ENCODE measurements at regions of chr4 and their contacts with region 1.

Region 1: GRCh38 chr4:7462509-7462971 is 27.8 kb upstream of the PSAPL1 start:
- DNase-seq: peak; percentile 63 to 78 (median 68)
- H3K4me3 ChIP-seq: no peak overlapping the region
- H3K27ac ChIP-seq: peak overlapping the region in 1 of 2 donors; percentile 55
- H3K4me1 ChIP-seq: peaks cover 29% of the 10 kb centered on the region
- H3K27me3 ChIP-seq: no peaks in the 10 kb centered on the region
- CTCF ChIP-seq: peak; percentile 18 to 40 (median 23)
- EP300 ChIP-seq: no peak
- POLR2A ChIP-seq: no peak

Region 2: GRCh38 chr4:7156761-7157488 is 305.6 kb before region 1 on chr4:
- intact Hi-C with region 1: no loop called
- DNase-seq: peak; percentile 68 to 80 (median 73)
- H3K4me3 ChIP-seq: no peak overlapping the region
- H3K27ac ChIP-seq: peak overlapping the region in 1 of 2 donors; percentile 36
- H3K4me1 ChIP-seq: peaks cover 23% of the 10 kb centered on the region
- H3K27me3 ChIP-seq: no peaks in the 10 kb centered on the region
- CTCF ChIP-seq: peak; percentile 53 to 79 (median 68)
- EP300 ChIP-seq: no peak
- POLR2A ChIP-seq: no peak

Region 3: DNA sequence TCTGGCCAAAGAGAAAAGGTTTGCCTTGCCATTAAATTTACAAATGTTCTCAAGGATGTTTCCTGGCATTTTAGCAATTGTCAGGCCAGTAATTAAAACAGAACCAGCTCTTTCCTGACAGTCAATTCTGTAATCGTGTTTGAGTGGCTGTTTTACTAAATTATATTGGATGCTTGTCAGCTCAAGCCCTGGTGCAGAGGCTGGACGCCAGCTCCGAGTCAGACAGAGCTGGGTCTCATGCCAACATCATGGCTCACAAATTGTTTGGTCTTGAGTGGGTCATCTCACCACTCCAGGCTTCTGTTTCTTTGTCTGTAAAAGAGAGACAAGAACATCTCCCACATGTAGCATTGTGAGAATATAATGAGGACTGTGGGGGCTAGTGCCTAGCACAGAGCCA is 162.5 kb after region 1 on chr4:
- intact Hi-C with region 1: no loop called
- DNase-seq: no peak
- H3K4me3 ChIP-seq: no peak overlapping the region
- H3K27ac ChIP-seq: no peak overlapping the region
- H3K4me1 ChIP-seq: peaks cover 2% of the 10 kb centered on the region
- H3K27me3 ChIP-seq: no peaks in the 10 kb centered on the region
- CTCF ChIP-seq: no peak
- EP300 ChIP-seq: no peak
- POLR2A ChIP-seq: no peak

Region 4: DNA sequence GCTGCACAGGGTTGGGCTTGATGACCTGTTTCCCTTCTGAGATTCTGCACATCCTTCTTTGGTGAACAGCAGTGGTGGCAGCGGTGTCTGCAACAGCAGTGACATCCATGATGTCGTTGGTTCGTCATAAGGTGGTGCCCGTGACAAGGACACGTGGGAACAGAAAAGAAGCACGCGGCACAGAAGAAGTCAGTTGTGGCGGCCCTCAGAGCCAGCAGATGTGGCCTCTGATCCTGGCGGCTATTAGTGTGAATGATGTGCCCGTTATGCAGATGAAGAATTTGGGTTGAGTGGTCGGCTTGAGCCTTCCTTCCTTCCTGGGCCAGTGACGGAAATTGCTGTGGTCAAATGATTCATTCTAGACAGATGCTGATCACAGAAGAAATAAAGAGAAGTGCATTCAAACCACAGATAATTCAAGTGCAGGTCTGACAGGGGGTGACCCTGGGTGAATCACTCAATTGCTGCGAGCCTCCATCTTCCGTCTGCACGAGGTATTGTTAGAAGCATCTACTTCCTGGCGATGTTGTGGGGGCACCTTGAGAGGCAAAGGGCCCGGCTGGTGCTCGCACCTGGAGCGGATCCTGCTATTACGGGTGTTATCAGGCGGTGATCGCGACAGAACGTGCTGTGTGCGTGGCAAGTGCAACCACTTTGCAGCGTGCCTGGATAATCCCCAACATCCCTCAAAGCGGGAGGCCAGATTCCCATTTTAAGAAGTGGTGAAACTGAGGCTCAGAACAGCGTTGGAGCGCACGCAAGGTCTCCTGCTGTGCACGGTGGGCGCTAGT is 187.4 kb after region 1 on chr4:
- intact Hi-C with region 1: loop called in 1 of 4 experiments (anchors 5 kb)
- DNase-seq: no peak
- H3K4me3 ChIP-seq: no peak overlapping the region
- H3K27ac ChIP-seq: peak overlapping the region in 1 of 2 donors; percentile 74
- H3K4me1 ChIP-seq: peaks cover 41% of the 10 kb centered on the region
- H3K27me3 ChIP-seq: no peaks in the 10 kb centered on the region
- CTCF ChIP-seq: no peak
- EP300 ChIP-seq: no peak
- POLR2A ChIP-seq: no peak

Region 5: DNA sequence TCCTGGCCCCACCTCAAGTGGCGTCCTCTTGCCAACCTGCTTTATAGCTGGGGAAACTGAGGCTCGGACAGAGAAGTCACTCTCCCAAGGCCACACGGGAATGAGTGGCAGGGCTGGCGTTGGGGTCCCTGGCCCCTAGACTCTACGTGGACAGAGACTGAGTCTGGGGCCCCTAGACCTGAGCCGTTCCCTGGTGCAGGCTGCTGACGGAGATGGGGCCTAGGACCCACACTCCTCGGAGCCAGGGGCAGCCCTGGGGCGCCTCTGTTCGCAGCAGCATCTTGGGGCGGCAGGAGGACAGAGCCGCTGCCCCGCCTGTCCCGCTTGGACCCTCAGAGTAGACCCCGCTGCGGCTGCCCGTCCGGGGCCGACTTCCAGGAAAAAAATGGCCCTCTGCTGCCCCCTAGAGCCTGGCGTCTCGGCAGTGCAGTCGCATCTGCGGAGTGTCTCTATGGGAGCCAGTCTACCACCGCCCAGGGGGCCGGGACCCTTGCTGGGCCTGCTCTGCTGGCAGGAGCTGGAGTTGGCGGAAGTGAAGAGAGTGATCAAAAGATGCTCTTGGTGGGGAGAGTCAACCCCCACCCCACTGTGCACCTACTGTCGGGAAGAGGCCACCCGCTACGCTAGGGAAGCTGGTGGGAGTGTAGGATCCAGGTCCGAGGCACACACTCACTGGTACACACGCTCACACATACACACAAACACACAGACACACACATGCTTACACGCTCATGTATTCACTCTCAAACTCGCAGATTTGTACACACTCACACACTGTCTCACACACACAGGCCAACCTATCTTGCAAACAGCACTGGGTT is 257.0 kb after region 1 on chr4:
- intact Hi-C with region 1: loop called in 3 of 4 experiments (anchors 2 to 10 kb)
- DNase-seq: peak; percentile 69 to 87 (median 83)
- H3K4me3 ChIP-seq: no peak overlapping the region
- H3K27ac ChIP-seq: no peak overlapping the region
- H3K4me1 ChIP-seq: peaks cover 2% of the 10 kb centered on the region
- H3K27me3 ChIP-seq: no peaks in the 10 kb centered on the region
- CTCF ChIP-seq: peak; percentile 77 to 81 (median 80)
- EP300 ChIP-seq: no peak
- POLR2A ChIP-seq: no peak